PC-9 (cell line): ENCODE measurements at regions of chr3 and their contacts with region 1.

Region 1: DNA sequence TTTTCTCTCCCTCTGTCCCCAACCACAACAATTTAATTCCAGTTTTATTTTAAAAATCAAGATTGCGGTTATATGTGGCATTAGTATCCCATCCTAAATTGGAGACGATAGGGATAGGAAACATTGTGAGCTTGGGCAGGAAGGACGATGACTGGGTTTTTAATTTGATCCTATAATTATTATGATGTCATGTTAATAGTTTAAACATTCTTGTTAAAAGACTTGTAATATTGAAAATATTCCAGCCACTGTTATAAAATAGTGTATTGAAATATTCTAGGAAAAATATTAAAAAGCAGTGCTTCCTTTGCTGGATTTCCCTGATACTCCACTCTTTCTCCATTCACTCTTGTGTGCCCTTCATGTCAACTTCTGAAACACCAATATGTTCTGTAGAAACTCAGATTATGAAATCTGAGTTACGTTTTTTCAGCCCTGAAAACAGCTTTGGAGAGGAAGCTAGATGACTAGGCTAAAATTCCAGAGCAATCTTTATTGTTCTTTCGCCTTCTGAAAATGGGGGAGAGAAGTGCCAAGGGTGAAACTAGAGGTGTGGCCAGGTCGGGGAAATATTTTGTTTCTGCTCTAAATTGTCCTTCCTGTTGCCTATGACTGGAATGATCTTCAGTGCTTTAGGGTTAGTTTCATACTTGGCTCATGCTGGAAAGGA is 46.1 kb upstream of the MAP3K13 start:
- DNase-seq: peak; percentile 64 to 96
- H3K4me3 ChIP-seq: peak overlapping the region; percentile 28
- H3K27ac ChIP-seq: peak overlapping the region; percentile 98
- H3K4me1 ChIP-seq: peaks cover 34% of the 10 kb centered on the region
- H3K27me3 ChIP-seq: no peaks in the 10 kb centered on the region
- CTCF ChIP-seq: no peak

Region 2: DNA sequence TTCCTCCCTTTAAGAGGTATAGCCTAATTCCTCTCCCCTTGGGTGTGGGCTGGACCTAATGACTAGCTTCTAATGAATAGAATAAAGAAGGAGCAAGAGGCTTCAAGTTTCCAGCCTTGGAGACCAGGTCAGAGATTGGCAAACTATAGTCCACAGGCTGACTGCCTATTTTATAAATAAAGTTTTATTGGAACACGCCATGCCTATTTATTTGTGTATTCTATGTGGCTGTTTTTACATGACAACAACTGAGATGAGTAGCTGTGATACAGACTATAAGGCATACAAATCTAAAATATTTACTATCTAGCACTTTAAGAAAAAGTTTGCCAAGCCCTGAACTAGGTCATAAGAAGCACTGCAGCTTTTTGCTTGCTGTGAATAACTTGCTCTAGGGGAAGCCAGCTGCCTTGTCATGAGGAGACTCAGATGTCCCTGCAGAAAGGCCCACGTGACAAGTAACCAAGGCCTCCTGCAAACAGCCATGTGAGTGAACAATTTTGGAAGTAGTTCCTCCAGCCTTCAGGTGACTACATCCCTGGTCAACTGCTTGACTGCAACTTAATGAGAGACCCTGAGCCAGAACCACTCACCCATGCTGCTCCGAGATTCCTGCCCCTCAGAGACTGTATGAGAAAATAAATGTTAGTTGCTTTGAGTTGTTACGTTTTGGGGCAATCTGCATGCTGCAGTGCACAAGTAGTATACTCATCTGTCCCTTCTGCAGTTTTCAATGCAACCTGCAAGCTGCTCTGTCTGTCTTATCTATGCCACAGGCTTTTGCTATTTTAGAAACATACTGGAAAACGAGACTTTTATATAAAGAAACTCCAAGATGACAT is 25.0 kb after region 1 on chr3:
- CTCF ChIA-PET with region 1: no interaction called
- POLR2A ChIA-PET with region 1: no interaction called
- intact Hi-C with region 1: loop called (anchors 1 kb)
- DNase-seq: peak; percentile 43 to 79
- H3K4me3 ChIP-seq: peak overlapping the region; percentile 12; the same call in 1 of the 2 replicates
- H3K27ac ChIP-seq: peak overlapping the region; percentile 84
- H3K4me1 ChIP-seq: peaks cover 40% of the 10 kb centered on the region
- H3K27me3 ChIP-seq: no peaks in the 10 kb centered on the region
- CTCF ChIP-seq: no peak

Region 3: DNA sequence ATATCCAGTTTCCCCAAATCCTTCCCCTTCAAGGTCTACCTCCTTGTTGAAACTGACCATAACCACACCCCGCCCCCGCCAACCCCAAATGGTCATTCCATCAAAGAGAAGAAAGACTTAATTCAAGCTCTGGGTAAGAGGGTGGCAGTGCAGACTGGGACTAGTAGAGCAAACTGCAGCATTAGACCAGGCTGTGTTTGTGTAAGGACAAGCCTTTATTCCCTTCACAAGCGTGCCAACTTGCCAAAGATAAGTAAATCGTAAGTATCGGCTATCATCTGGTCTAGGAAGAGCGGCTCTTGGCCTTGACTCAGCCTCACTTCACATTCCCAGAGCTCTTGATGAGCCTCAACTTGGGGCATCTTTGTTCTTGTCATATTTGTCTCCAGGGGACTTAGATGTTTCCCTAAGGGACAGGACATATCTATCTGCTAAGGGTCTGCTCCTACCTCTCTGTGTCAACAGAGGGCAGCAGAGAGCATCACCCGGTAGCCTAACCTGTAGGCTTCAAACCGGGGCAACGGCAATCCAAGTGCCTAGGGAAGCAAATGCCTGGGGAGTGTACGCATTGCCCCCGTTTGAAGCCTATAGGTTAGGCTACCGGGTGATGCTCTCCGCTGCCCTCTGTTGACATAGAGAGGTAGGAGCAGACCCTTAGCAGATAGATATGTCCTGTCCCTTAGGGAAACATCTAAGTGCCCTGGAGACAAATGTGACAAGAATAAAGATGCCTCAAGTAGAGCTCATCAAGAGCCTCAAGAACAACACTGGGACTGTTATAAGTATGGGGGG is 37.1 kb after region 1 on chr3:
- CTCF ChIA-PET with region 1: interaction called, 15 read pairs
- POLR2A ChIA-PET with region 1: no interaction called
- intact Hi-C with region 1: no loop called
- DNase-seq: peak; percentile 78 to 82
- H3K4me3 ChIP-seq: no peak overlapping the region
- H3K27ac ChIP-seq: no peak overlapping the region
- H3K4me1 ChIP-seq: no peaks in the 10 kb centered on the region
- H3K27me3 ChIP-seq: no peaks in the 10 kb centered on the region
- CTCF ChIP-seq: peak; percentile 92

Region 4: DNA sequence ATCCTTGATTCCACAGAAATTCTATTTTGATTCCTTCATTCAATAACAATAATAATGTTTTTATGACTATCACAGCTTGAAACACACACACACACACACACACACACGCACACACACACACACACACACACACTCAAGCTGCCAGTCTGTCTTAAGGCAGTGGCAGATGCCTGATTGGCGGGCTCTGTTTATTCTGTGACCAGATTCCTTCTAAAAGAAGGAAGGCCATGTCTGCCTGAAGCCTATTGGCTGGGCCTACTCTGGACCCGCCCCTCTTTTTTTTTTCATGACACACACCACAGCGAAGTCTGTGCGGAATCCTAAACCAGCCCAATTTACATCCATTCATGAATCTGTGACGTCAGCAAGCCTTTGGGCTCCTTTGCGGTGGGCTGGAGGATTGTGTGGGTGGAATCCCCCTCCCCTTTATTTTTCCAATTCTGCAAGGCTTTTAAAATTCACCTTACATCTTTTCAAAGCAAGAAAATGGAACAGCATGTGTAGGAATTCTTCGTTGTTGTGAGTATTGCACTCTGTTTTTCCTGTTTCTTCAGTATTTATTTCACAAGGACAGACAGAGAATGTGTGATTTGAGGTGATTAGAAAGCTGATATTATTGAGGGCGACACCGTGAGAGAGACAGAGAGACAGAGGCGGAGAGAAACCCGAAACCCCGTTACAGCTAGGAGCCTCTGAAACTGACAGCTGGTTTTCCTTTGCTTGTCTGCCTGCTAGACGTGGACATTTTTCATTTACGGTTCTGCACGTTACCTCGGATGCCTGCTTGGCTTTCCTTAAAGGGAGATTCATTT is 46.2 kb after region 1 on chr3 and contains the start of gene MAP3K13:
- CTCF ChIA-PET with region 1: no interaction called
- POLR2A ChIA-PET with region 1: no interaction called
- intact Hi-C with region 1: loop called (anchors 1 kb)
- DNase-seq: peak; percentile 83 to 99
- H3K4me3 ChIP-seq: peak within 1 kb of the TSS; percentile 66
- H3K27ac ChIP-seq: peak within 1 kb of the TSS; percentile 55
- H3K4me1 ChIP-seq: peaks cover 24% of the 10 kb centered on the region
- H3K27me3 ChIP-seq: no peaks in the 10 kb centered on the region
- CTCF ChIP-seq: no peak
- total RNA-seq, gene MAP3K13: 42.2 and 65.5 TPM in 2 replicates

Region 5: DNA sequence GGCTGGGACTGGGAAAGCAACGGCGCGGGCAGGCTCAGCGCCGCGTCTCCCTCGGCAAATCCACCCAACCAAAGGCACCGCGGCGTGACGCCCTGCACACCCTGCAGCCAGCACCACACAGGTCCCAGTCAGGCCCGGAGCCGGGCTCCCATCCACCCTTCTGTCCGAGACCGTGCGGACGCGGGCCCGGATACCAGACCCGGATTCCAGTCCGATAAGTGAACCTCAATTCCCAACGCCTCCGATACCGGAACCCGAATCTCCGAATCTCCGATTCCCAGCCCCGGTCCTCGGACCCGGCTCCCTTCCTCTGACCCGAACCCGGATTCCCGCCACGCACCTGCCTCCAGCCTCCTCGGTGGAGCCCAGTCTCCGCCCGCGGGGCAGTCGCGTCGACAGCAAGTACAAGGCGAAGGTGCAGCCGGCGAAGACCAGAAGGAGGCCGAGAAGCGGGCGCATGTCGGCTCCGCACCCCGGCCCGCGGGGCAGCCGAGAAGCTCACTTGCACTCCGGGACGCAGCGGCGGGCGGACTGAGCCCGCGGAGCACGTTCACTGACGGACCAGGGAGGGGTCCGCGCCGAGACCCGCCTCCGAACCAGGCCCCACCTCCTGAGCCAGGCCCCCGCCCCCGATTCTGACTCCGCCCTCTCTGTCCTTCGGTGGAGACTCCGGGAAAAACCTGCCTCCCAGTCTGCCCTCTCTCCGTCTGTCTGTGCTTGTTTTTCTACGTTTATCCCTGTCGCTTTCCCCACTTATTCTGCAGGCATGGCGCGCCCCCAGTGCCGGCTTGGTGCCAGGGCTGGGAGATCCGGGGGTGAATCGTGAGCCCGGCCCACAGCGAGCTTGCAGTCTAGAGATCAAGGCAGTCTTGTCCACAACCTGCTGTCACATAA is 181.9 kb after region 1 on chr3 and contains the start of gene TMEM41A:
- CTCF ChIA-PET with region 1: no interaction called
- POLR2A ChIA-PET with region 1: no interaction called
- intact Hi-C with region 1: loop called (anchors 5 kb)
- DNase-seq: peak; percentile 81 to 98
- H3K4me3 ChIP-seq: peak within 1 kb of the TSS; percentile 78
- H3K27ac ChIP-seq: peak within 1 kb of the TSS; percentile 74
- H3K4me1 ChIP-seq: peaks cover 11% of the 10 kb centered on the region
- H3K27me3 ChIP-seq: no peaks in the 10 kb centered on the region
- CTCF ChIP-seq: 0 out of 2 replicates have a peak, but pooled peaks have one; percentile 17
- total RNA-seq, gene TMEM41A: 37.2 and 54.1 TPM in 2 replicates

Region 6: GRCh38 chr3:185552358-185552877 is 235.5 kb after region 1 on chr3 and contains the start of gene LIPH:
- CTCF ChIA-PET with region 1: no interaction called
- POLR2A ChIA-PET with region 1: no interaction called
- intact Hi-C with region 1: loop called (anchors 5 kb)
- DNase-seq: peak; percentile 61 to 96
- H3K4me3 ChIP-seq: peak within 1 kb of the TSS; percentile 61
- H3K27ac ChIP-seq: peak within 1 kb of the TSS; percentile 93
- H3K4me1 ChIP-seq: peaks cover 81% of the 10 kb centered on the region
- H3K27me3 ChIP-seq: no peaks in the 10 kb centered on the region
- CTCF ChIP-seq: no peak
- total RNA-seq, gene LIPH: 38.4 and 44.7 TPM in 2 replicates

Region 7: DNA sequence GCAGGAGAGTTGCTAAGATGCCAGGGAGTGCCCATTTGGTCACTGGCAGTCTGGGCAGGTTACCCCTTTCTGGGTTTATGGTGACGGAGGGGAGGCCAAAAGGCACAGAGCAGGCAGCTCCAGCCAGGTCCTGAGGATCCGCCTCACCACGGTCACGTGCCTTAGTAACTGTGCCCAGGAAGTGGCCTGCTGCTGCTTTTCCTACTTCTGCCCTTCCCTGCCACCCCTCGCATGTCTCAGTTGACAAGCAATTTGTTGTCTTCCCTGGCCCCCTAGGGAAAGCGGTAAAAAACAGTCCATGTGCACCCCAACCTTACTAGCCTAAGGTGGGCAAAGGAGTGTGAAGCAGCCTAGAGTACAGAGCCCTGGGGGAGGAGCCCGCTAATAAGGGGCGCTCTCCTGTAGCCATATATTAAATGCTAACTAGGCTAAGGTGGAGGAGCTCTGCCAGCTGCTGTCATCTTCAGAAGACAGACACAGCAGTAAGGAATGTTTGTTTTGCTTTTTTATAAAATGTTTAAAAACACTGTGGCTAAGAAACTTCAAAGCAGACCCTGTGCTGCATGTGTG is 244.6 kb after region 1 on chr3:
- CTCF ChIA-PET with region 1: no interaction called
- POLR2A ChIA-PET with region 1: interaction called, 4 read pairs
- intact Hi-C with region 1: loop called (anchors 5 kb)
- DNase-seq: peak; percentile 26 to 60
- H3K4me3 ChIP-seq: peak overlapping the region; percentile 53; the same call in 1 of the 2 replicates
- H3K27ac ChIP-seq: peak overlapping the region; percentile 99; the same call in 1 of the 2 replicates
- H3K4me1 ChIP-seq: peaks cover 49% of the 10 kb centered on the region
- H3K27me3 ChIP-seq: no peaks in the 10 kb centered on the region
- CTCF ChIP-seq: no peak